Endothelial cell of umbilical vein (primary cell): ENCODE measurements at regions of chrX and their contacts with region 1.

Region 1: GRCh38 chrX:46554942-46555341 is 9.7 kb upstream of the ZNF674 start:
- DNase-seq: peak; percentile 25
- H3K4me3 ChIP-seq: no peak overlapping the region
- H3K27ac ChIP-seq: no peak overlapping the region
- H3K4me1 ChIP-seq: no peaks in the 10 kb centered on the region
- H3K27me3 ChIP-seq: no peaks in the 10 kb centered on the region
- CTCF ChIP-seq: no peak
- POLR2A ChIP-seq: no peak

Region 2: GRCh38 chrX:46611658-46612362 is 56.9 kb after region 1 on chrX:
- CTCF ChIA-PET with region 1: no interaction called
- POLR2A ChIA-PET with region 1: no interaction called
- dilution Hi-C with region 1: no loop called
- intact Hi-C with region 1: no loop called
- DNase-seq: no peak
- H3K4me3 ChIP-seq: no peak overlapping the region
- H3K27ac ChIP-seq: no peak overlapping the region
- H3K4me1 ChIP-seq: no peaks in the 10 kb centered on the region
- H3K27me3 ChIP-seq: no peaks in the 10 kb centered on the region
- CTCF ChIP-seq: no peak
- POLR2A ChIP-seq: no peak

Region 3: GRCh38 chrX:46642145-46642544 is 87.2 kb after region 1 on chrX:
- CTCF ChIA-PET with region 1: interaction called, 37 read pairs
- POLR2A ChIA-PET with region 1: no interaction called
- dilution Hi-C with region 1: no loop called
- intact Hi-C with region 1: loop called (anchors 1 kb)
- DNase-seq: peak; percentile 42
- H3K4me3 ChIP-seq: no peak overlapping the region
- H3K27ac ChIP-seq: no peak overlapping the region
- H3K4me1 ChIP-seq: peaks cover 3% of the 10 kb centered on the region
- H3K27me3 ChIP-seq: no peaks in the 10 kb centered on the region
- CTCF ChIP-seq: peak in 1 of 2 donors; percentile 16
- POLR2A ChIP-seq: no peak

Region 4: DNA sequence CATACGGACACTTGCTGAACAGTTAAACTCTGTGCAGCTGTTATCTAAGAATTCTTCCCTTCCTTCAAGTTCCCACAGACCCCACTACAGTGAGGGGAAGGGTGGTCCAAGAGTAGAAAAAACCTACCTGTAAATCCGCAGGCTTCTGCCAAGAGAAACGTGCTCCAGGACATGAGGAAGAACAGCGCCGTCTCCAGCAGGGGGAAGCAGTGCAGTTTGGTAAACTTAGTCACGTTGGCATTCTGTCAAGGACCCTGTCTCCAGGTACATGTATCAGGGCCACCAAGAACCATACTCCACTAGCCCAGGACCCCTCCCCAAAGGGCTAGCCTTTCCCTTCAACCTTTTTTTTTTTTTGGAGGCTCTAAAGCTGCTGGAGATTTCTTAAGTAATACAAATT is 98.5 kb after region 1 on chrX:
- CTCF ChIA-PET with region 1: interaction called, 10 read pairs
- POLR2A ChIA-PET with region 1: no interaction called
- dilution Hi-C with region 1: no loop called
- intact Hi-C with region 1: no loop called
- DNase-seq: peak; percentile 40
- H3K4me3 ChIP-seq: no peak overlapping the region
- H3K27ac ChIP-seq: no peak overlapping the region
- H3K4me1 ChIP-seq: peaks cover 12% of the 10 kb centered on the region
- H3K27me3 ChIP-seq: no peaks in the 10 kb centered on the region
- CTCF ChIP-seq: peak; percentile 24 to 40
- POLR2A ChIP-seq: no peak

Region 5: DNA sequence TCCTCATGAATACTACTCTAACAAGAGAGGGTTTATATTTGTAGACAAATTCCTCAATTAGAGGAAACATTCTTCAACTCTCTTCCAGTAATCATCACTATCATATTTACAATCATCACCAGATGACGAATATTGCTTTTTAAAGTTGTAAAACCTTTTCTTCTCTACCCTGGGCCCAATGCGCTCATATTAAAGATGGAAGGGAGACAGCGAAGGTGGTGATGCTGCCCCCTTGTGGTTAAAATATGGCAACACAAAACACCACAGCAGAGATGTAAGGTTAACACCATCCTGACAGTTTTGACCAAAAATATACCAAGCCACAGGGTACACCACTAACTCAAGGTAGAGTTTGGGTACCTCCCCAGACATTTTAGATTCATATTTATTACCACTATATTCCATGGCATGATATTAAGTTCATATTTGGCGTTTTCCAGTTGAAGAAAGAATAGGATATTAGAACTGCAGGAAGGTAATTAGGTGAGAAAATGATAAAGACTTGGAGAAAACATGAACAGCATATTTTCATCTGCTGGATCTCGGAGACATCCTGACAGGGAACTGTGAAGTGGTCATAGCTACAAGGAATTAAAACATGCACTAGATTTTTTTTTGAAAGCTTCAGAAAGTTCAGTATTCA is 131.2 kb after region 1 on chrX:
- CTCF ChIA-PET with region 1: interaction called, 16 read pairs
- POLR2A ChIA-PET with region 1: no interaction called
- dilution Hi-C with region 1: no loop called
- intact Hi-C with region 1: loop called (anchors 1 kb)
- DNase-seq: peak; percentile 41
- H3K4me3 ChIP-seq: no peak overlapping the region
- H3K27ac ChIP-seq: no peak overlapping the region
- H3K4me1 ChIP-seq: peaks cover 3% of the 10 kb centered on the region
- H3K27me3 ChIP-seq: no peaks in the 10 kb centered on the region
- CTCF ChIP-seq: peak; percentile 52 to 56
- POLR2A ChIP-seq: no peak